Activated T-helper 2 cell treated with anti-CD3 and anti-CD28 coated beads, Interferon-gamma antibody, Interleukin-2, Interleukin-4, amounts not matched to agents 10 μg/mL and 5 μg/mL and 100 μg/mL, durations not matched to agents 14 hours and 24 hours and 36 hours (primary cell): ENCODE measurements at regions of chr11 and their contacts with region 1.

Region 1: DNA sequence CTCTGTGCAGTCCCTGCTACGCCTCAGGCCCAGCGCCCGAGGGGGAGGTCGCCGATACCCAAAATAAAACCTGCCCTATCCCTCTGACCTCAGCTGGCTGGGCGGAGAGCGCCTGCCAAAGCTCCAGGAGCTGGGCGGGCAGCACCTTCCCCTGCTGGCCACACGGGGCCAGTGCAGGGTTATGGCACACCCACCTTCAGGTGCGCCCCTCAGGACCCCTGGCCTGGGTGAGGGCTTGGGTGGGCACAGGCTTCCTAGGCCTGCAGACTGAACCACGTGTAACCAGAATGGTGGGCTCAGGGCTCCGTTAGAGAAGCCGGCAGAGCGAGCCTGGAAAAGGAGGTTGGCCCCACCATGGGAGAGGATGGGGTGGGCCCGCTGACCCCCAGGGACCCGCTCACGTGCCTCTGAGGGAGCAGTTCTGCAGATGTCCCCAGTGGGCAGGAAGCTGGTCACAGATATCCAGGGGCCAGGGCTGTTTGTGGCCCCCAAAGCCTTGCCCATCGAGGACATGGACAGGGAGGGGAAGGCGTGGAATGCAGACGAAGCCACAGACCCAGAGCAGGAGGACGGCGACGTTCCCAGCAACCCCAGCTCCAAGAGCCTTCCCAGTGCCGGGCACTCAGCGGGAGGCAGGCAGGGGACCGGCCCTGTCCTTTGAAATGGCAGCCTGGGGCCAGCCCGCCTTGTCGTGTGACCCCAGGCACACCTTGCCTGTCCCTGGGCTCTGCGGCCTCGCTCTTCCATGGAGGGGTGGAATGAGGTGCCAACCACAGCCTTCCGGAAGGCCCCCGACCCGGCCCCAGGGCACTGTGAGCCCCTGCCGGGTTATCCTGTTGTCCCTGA is 1.6 kb upstream of the TNNT3 start:
- DNase-seq: no peak
- H3K4me3 Mint-ChIP-seq: no peak overlapping the region
- H3K27ac Mint-ChIP-seq: no peak overlapping the region
- H3K4me1 Mint-ChIP-seq: peaks cover 7% of the 10 kb centered on the region
- H3K27me3 Mint-ChIP-seq: no peaks in the 10 kb centered on the region

Region 2: GRCh38 chr11:1837171-1838076 is 80.5 kb before region 1 on chr11:
- intact Hi-C with region 1: loop called (anchors 2 kb)
- DNase-seq: peak; percentile 67
- H3K4me3 Mint-ChIP-seq: no peak overlapping the region
- H3K27ac Mint-ChIP-seq: no peak overlapping the region
- H3K4me1 Mint-ChIP-seq: peaks cover 7% of the 10 kb centered on the region
- H3K27me3 Mint-ChIP-seq: peaks cover 2% of the 10 kb centered on the region

Region 3: DNA sequence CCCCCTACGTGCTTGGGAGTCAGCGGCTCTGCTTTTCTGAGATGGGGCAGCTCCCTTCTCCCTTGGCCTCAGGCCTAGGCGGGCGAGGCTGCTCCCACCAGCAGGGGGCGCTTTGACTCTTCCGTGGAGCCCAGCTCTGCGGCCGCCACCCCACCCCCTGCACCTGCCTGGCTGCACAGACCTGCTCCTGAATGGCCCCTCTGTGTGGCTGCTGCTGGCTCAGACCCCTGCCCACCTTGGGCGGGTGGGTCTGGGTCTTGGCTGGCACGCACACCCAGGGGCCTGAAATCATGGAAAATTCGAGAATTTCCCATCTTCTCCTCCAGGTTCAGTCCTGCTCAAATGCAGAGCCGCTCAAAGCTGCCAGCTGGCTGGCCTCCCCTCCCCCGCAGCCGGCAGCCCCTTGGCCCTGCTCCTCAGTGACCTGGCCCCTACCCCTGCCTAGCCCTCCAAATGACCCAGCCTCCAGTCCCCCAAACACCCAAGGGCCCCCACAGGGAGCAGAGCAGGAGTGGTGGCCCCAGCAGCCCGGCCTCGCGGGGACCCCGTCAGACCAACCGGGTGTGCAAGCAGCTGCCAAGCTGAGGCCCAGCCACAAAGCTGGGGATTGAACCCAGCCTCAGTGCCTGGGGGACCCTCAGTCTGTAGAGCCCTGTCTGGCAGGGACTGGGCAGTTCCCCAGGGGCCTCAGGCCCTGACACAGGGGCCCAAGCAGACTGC is 35.2 kb before region 1 on chr11:
- intact Hi-C with region 1: loop called (anchors 5 kb)
- DNase-seq: peak; percentile 66
- H3K4me3 Mint-ChIP-seq: no peak overlapping the region
- H3K27ac Mint-ChIP-seq: no peak overlapping the region
- H3K4me1 Mint-ChIP-seq: peaks cover 8% of the 10 kb centered on the region
- H3K27me3 Mint-ChIP-seq: no peaks in the 10 kb centered on the region

Region 4: DNA sequence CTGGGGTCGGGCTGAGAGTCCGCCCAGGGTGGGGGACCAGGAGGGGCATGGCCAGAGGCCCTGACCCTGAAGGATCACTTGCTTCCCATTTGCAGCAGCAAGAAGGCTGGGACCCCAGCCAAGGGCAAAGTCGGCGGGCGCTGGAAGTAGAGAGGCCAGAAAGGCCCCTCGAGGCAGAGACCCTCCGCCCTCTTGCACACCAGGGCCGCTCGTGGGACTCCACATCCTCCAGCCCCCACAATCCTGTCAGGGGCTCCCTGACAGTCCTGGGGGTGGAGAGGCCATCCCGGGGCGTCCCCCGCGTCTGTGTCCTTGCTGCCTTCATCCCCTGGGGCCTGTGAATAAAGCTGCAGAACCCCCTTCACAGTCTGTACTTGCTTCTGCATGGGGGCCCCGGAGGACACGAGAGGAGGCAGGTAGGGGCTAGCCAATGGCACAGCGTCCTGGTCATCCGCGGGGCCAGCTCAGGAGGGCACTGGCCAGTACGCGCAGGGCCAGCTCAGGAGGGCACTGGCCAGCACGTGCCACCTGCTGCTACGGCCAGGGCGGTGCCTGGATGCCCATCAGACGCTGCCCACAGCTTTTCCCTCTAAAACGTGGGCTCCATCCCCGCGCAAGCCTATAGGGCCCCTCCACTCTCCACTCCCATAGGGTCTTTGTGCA is 20.6 kb after region 1 on chr11:
- intact Hi-C with region 1: loop called (anchors 1 kb)
- DNase-seq: no peak
- H3K4me3 Mint-ChIP-seq: no peak overlapping the region
- H3K27ac Mint-ChIP-seq: no peak overlapping the region
- H3K4me1 Mint-ChIP-seq: peaks cover 3% of the 10 kb centered on the region
- H3K27me3 Mint-ChIP-seq: no peaks in the 10 kb centered on the region